ENCODE measurements at regions of chr18 and their contacts with region 1.

Region 1: DNA sequence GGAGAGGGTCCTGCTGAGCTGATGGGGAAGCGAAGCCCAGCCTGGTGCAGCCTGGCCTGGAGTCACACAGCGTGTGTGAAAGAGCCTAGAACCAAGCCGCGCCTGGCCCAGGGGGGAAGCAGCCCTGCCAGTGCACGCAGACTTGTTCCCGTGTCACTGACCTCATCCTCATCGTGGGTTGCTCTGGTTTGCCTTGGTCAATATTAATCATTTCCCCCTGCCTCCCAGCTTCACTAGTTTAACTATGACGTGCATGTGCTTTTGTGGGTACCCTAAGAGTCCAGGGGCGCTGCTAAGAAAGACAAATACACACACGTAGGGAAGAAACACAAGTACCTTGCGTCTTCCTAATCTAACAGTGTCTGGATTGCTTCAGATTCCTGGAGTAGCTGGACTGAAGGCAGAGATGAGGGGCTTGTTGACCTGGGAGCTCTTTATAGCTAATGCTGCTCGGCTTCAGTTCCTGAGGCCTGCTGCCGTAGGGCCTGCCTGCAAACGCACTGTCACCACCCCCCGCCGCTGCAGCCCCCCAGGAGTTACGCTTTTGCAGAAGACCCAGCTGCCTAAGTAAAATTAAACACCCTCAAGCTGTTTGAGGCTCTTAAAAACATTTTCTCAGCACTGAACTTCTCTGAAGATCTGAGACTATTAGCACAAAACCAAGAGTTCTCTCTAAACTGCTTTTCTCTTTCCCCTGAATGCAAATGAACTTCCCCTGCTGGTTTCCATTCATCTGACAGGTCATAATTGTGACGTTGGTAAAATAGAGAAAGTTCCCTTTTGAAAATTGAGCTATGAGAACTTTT is 159.2 kb downstream of the FAM210A start:
- DNase-seq: no peak
- H3K4me3 Mint-ChIP-seq: peak overlapping the region; percentile 7
- H3K27ac Mint-ChIP-seq: peak overlapping the region; percentile 68
- H3K4me1 Mint-ChIP-seq: peaks cover 68% of the 10 kb centered on the region
- H3K27me3 Mint-ChIP-seq: no peaks in the 10 kb centered on the region

Region 2: GRCh38 chr18:13137670-13138419 is 429.3 kb before region 1 on chr18:
- CTCF ChIA-PET with region 1: no interaction called
- intact Hi-C with region 1: loop called (anchors 5 kb)
- DNase-seq: peak; percentile 74
- H3K4me3 Mint-ChIP-seq: peak overlapping the region; percentile 96
- H3K27ac Mint-ChIP-seq: peak overlapping the region; percentile 75
- H3K4me1 Mint-ChIP-seq: peaks cover 24% of the 10 kb centered on the region
- H3K27me3 Mint-ChIP-seq: no peaks in the 10 kb centered on the region

Region 3: DNA sequence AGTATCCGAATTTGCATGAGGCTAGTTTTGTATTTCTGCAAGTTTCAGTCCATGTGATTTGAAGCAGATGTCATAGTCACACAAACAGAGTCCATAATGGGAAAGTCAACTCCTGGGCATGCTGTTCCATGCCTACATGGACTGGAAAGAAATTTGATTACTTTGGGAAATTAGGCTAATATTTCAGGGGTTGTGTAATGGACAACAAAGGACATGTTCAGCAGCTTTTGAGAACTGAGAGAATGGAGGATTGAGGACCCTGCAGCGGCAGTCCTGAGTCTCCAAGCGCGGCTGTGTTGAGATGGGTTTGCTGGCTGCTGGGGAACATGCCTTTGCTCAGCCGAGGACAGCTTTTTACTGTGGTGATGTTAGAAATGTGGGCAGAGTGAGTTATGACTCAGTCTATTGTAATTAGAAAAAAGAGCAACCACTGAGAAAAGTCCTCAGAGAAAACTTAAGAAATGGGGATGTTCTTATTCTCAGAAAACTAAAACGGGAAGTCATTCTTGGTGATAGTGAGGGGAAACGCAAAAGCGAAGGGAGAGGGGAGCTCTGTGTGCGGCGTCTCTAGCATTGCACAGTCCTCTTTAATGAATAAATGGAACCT is 10.1 kb after region 1 on chr18:
- CTCF ChIA-PET with region 1: interaction called, 3 read pairs
- intact Hi-C with region 1: loop called (anchors 1 kb)
- DNase-seq: peak; percentile 71
- H3K4me3 Mint-ChIP-seq: peak overlapping the region; percentile 5
- H3K27ac Mint-ChIP-seq: peak overlapping the region; percentile 55
- H3K4me1 Mint-ChIP-seq: peaks cover 36% of the 10 kb centered on the region
- H3K27me3 Mint-ChIP-seq: no peaks in the 10 kb centered on the region

Region 4: GRCh38 chr18:13585379-13586153 is 18.4 kb after region 1 on chr18:
- CTCF ChIA-PET with region 1: interaction called, 3 read pairs
- intact Hi-C with region 1: loop called (anchors 1 kb)
- DNase-seq: no peak
- H3K4me3 Mint-ChIP-seq: no peak overlapping the region
- H3K27ac Mint-ChIP-seq: no peak overlapping the region
- H3K4me1 Mint-ChIP-seq: peaks cover 44% of the 10 kb centered on the region
- H3K27me3 Mint-ChIP-seq: no peaks in the 10 kb centered on the region

Measured in activated naive CD4-positive, alpha-beta T cell treated with anti-CD3 and anti-CD28 coated beads for 36 hours (primary cell).